Sciatic nerve (tissue), 2 donors: ENCODE measurements at regions of chr7 and their contacts with region 1.

Region 1: GRCh38 chr7:138603549-138604318 is 97.4 kb downstream of the SVOPL start:
- DNase-seq: no peak
- ATAC-seq: no peak

Region 2: GRCh38 chr7:138565451-138566114 is 38.2 kb before region 1 on chr7:
- intact Hi-C with region 1: no loop called
- DNase-seq: no peak
- ATAC-seq: no peak

Region 3: DNA sequence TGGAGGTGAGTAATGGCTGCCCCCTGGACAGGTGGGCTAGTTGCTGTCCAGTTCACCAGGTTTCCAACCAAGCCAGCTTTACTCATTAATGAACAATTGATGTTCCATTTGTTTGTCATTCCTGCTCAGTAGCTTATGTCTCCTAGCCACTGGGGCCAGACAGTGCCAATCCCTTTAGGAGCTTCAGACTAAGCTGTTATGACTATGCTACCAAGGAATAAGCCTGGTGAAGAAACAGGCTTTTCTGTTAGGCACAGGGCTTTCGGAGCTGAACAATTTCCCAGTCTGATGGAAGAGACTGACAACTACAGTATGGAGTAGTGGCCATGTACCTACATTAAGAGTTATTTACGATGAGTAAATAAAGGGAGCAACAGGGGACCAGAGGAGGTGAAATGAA is 735.3 kb after region 1 on chr7:
- intact Hi-C with region 1: loop called (anchors 5 kb)
- DNase-seq: no peak
- ATAC-seq: no peak

Region 4: GRCh38 chr7:139972029-139972428 is 1368.3 kb after region 1 on chr7:
- intact Hi-C with region 1: no loop called
- DNase-seq: no peak
- ATAC-seq: no peak